ENCODE measurements at regions of chr12 and their contacts with region 1.

Region 1: DNA sequence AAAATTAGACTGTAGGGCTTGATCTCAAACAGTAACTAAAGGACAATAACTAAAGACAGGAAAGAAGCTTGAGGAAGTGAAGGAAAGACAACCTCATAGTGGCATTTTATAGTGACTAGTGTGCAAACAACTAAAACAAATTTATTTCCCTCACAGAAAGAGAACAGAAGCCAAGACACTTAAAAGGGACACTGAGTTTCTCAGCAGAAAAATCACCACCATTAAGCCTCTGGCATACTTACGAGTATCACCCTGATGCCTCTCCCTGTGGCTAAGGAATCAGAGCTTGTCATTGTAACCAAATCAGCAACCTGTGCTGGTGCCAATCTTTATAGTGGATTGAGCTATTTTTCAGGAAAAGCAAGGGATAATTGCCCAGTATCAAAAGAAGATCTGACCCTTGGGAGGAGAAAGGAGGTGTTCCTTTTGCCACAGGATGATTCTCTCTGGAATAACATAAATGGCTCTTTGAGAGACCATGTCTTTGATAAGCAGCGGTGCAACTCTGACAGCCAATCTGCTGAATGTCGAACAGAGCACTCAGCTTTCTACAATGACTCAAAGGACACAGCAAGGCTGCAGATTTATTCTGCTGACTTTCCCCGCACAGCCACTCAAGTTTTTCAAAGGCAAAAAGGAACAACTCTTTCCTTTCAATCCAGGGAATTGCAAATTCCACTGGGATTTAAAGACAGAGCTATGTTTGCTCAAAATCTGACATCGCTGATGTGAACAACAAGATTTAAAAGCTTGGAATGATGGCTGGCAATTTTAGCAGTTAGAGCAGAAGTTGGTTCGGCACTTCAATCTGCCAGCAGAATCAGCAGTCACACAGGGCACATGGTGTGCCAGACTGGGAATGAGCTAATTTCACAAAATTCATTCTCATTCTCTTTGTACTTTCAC is 34.6 kb downstream of the ATF7 start:
- DNase-seq: no peak
- ATAC-seq: no peak
- H3K4me3 ChIP-seq: no peak overlapping the region
- H3K27ac ChIP-seq: no peak overlapping the region
- H3K4me1 ChIP-seq: peaks cover 6% of the 10 kb centered on the region
- H3K27me3 ChIP-seq: no peaks in the 10 kb centered on the region
- CTCF ChIP-seq: no peak
- EP300 ChIP-seq: no peak
- POLR2A ChIP-seq: no peak
- RAD21 ChIP-seq: no peak

Region 2: GRCh38 chr12:52486166-52487105 is 1105.1 kb before region 1 on chr12:
- CTCF ChIA-PET with region 1: no interaction called
- POLR2A ChIA-PET with region 1: no interaction called
- RAD21 ChIA-PET with region 1: no interaction called
- SMC1A ChIA-PET with region 1: no interaction called
- in situ Hi-C with region 1: no loop called
- intact Hi-C with region 1: no loop called
- DNase-seq: no peak
- ATAC-seq: no peak
- H3K4me3 ChIP-seq: no peak overlapping the region
- H3K27ac ChIP-seq: no peak overlapping the region
- H3K4me1 ChIP-seq: no peaks in the 10 kb centered on the region
- H3K27me3 ChIP-seq: no peaks in the 10 kb centered on the region; a peak in 2 of 4 replicates
- CTCF ChIP-seq: no peak
- EP300 ChIP-seq: no peak
- POLR2A ChIP-seq: no peak
- RAD21 ChIP-seq: no peak

Region 3: GRCh38 chr12:53524476-53524875 is 67.1 kb before region 1 on chr12:
- CTCF ChIA-PET with region 1: no interaction called
- POLR2A ChIA-PET with region 1: no interaction called
- RAD21 ChIA-PET with region 1: no interaction called
- SMC1A ChIA-PET with region 1: no interaction called
- in situ Hi-C with region 1: no loop called
- intact Hi-C with region 1: no loop called
- DNase-seq: no peak
- ATAC-seq: no peak
- H3K4me3 ChIP-seq: no peak overlapping the region
- H3K27ac ChIP-seq: no peak overlapping the region
- H3K4me1 ChIP-seq: no peaks in the 10 kb centered on the region
- H3K27me3 ChIP-seq: no peaks in the 10 kb centered on the region
- CTCF ChIP-seq: no peak
- EP300 ChIP-seq: no peak
- POLR2A ChIP-seq: no peak
- RAD21 ChIP-seq: no peak

Region 4: GRCh38 chr12:53618275-53618674 is 26.7 kb after region 1 on chr12:
- CTCF ChIA-PET with region 1: interaction called, 4 read pairs
- POLR2A ChIA-PET with region 1: interaction called, 14 read pairs
- RAD21 ChIA-PET with region 1: interaction called, 4 read pairs
- SMC1A ChIA-PET with region 1: interaction called, 9 read pairs
- in situ Hi-C with region 1: no loop called
- intact Hi-C with region 1: no loop called
- DNase-seq: no peak
- ATAC-seq: peak; percentile 46
- H3K4me3 ChIP-seq: peak overlapping the region; percentile 51
- H3K27ac ChIP-seq: peak overlapping the region; percentile 76
- H3K4me1 ChIP-seq: peaks cover 16% of the 10 kb centered on the region
- H3K27me3 ChIP-seq: no peaks in the 10 kb centered on the region
- CTCF ChIP-seq: no peak
- EP300 ChIP-seq: no peak
- POLR2A ChIP-seq: no peak
- RAD21 ChIP-seq: no peak

Region 5: DNA sequence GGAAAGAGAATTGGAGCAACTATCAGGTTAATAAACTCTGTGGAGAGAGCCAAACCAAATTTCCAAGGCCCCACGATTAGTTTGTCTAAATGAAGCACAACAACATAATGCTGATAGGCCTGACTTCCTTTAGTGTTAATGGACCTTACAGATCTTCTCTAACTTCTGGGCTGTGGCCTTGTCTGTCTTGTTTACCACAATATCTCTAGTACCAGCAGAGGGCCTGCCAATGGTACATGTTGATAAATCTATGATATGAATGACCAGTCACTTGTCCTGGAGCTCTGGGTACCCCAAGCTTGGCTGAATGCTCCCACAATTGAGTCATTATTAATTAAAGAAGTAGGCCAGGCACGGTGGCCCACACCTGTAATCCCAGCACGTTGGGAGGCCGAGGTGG is 239.1 kb after region 1 on chr12:
- CTCF ChIA-PET with region 1: no interaction called
- POLR2A ChIA-PET with region 1: no interaction called
- RAD21 ChIA-PET with region 1: no interaction called
- SMC1A ChIA-PET with region 1: no interaction called
- in situ Hi-C with region 1: no loop called
- intact Hi-C with region 1: no loop called
- DNase-seq: no peak
- ATAC-seq: no peak
- H3K4me3 ChIP-seq: no peak overlapping the region
- H3K27ac ChIP-seq: no peak overlapping the region
- H3K4me1 ChIP-seq: no peaks in the 10 kb centered on the region
- H3K27me3 ChIP-seq: peaks cover 0 to 7% of the 10 kb centered on the region in 2 experiments; a peak in 2 of 4 replicates
- CTCF ChIP-seq: no peak
- EP300 ChIP-seq: no peak
- POLR2A ChIP-seq: no peak
- RAD21 ChIP-seq: no peak

Region 6: GRCh38 chr12:54240971-54241588 is 649.5 kb after region 1 on chr12:
- CTCF ChIA-PET with region 1: no interaction called
- POLR2A ChIA-PET with region 1: no interaction called
- RAD21 ChIA-PET with region 1: no interaction called
- SMC1A ChIA-PET with region 1: no interaction called
- in situ Hi-C with region 1: no loop called
- intact Hi-C with region 1: no loop called
- DNase-seq: peak; percentile 80
- ATAC-seq: peak; percentile 95
- H3K4me3 ChIP-seq: no peak overlapping the region
- H3K27ac ChIP-seq: peak overlapping the region; percentile 45
- H3K4me1 ChIP-seq: peaks cover 16% of the 10 kb centered on the region
- H3K27me3 ChIP-seq: no peaks in the 10 kb centered on the region
- CTCF ChIP-seq: no peak
- EP300 ChIP-seq: 0 out of 4 replicates have a peak, but pooled peaks of 1 of the 2 experiments have one; percentile 39
- POLR2A ChIP-seq: no peak
- RAD21 ChIP-seq: no peak